ENCODE measurements at regions of chr4 and their contacts with region 1.

Region 1: DNA sequence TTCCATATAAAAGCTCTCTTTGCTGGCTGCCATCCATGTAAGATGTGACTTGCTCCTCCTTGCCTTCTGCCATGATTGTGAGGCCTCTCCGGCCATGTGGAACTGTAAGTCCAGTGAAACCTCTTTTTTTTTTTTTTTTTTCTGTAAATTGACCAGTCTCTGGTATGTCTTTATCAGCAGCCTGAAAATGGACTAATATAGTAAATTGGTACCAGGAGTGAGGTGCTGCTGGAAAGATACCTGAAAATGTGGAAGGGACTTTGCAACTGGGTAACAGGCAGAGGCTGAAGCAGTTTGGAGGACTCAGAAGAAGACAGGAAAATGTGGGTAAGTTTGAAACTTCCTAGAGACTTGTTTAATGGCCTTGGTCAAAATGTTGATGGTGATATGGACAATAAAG is 124.3 kb upstream of the AADAT start:
- DNase-seq: no peak
- H3K27ac ChIP-seq: no peak overlapping the region
- CTCF ChIP-seq: no peak

Region 2: DNA sequence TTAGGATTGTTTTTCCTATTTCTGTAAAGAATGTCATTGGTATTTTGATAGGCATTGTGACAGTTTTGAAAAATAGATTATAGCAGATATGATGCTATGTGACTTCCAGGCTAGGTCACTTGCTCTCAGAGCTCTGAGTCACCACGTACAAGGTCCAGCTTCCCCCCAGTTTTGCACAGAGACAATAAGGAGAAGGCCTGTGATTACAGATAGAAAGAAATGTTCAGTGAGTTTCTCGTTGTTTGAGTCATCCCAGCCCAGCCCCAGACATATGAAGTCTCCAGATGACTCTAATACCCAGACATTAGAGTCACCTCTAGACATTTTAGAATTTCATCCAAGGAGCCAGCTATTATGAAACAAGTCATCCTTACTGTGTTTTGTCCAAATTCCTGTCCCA is 245.1 kb before region 1 on chr4:
- CTCF ChIA-PET with region 1: no interaction called
- POLR2A ChIA-PET with region 1: no interaction called
- DNase-seq: no peak
- H3K27ac ChIP-seq: no peak overlapping the region
- CTCF ChIP-seq: no peak

Region 3: GRCh38 chr4:170027181-170027829 is 186.8 kb before region 1 on chr4:
- CTCF ChIA-PET with region 1: no interaction called
- POLR2A ChIA-PET with region 1: no interaction called
- DNase-seq: peak; percentile 93
- H3K27ac ChIP-seq: peak overlapping the region; percentile 87
- CTCF ChIP-seq: no peak

Region 4: DNA sequence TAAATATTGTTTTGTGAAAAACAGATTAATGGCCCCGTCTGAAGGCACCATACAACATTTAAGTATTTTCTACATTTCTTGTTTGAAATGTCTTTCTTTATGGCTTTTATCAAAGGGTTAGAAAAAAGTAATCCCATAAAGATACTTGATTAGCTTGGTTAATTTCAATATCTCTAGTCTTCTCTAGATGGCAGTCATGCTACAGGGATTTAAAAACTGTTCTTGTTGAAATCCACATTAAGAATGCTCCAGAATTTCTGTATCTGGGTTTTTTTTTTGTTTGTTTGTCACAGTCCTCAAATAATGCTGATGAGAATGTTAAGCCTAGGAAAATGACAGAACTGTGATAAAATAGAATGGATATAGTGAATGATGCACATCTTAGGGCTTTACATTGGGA is 15.4 kb before region 1 on chr4:
- CTCF ChIA-PET with region 1: interaction called, 10 read pairs
- POLR2A ChIA-PET with region 1: no interaction called
- DNase-seq: peak; percentile 24
- H3K27ac ChIP-seq: no peak overlapping the region
- CTCF ChIP-seq: peak; percentile 54; the same call in 1 of the 2 replicates

Region 5: GRCh38 chr4:170231377-170231776 is 17.3 kb after region 1 on chr4:
- CTCF ChIA-PET with region 1: no interaction called
- POLR2A ChIA-PET with region 1: no interaction called
- DNase-seq: no peak
- H3K27ac ChIP-seq: no peak overlapping the region
- CTCF ChIP-seq: no peak